HEK293 (cell line): ENCODE measurements at regions of chr9 and their contacts with region 1.

Region 1: DNA sequence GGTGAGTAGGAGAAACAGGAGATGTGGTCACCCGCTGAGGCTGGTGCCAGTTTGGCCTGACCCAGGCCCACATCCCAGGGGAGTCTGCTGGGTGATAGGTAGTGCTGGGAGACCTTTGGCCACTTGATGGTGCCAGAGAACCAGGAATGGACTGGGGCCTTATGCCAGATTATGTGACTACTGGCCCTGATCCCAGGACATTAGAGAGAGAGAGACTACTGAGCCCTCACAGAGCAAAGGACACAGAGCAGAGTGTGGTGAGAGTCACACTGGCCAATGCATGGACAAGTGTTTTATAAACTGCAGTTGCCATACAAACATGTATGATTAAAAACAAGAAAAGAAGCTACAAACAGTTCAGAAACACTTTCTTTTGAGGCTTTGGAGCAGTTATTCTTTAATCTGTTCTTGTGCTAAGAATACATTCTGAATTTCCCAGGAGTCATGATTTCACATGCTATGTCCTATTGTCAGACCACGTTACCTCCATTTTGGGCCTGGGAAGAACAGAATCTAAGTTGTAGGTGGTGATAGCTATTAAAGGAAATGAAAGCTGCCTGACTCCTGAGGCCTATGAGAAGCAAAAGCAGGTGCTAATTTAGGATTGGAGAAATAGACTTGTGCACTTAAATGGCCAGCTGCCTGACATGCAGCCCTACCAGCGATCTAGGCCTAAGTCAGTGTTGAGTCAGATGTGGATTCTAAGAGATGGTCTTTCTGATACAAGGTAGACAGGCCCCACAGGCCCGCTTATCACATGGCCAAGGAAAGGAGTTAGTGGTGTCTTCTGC is 32.6 kb upstream of the TMOD1 start:
- H3K4me3 ChIP-seq: no peak overlapping the region
- H3K27ac ChIP-seq: no peak overlapping the region
- H3K4me1 ChIP-seq: no peaks in the 10 kb centered on the region
- CTCF ChIP-seq: peak; percentile 70

Region 2: GRCh38 chr9:96854073-96854876 is 614.6 kb before region 1 on chr9 and contains the start of gene ZNF782:
- CTCF ChIA-PET with region 1: interaction called, 16 read pairs
- POLR2A ChIA-PET with region 1: no interaction called
- H3K4me3 ChIP-seq: peak within 1 kb of the TSS; percentile 84
- H3K27ac ChIP-seq: peak within 1 kb of the TSS; percentile 53; the same call in 1 of the 2 replicates
- H3K4me1 ChIP-seq: no peaks in the 10 kb centered on the region
- CTCF ChIP-seq: 0 out of 2 replicates have a peak, but pooled peaks have one; percentile 16

Region 3: DNA sequence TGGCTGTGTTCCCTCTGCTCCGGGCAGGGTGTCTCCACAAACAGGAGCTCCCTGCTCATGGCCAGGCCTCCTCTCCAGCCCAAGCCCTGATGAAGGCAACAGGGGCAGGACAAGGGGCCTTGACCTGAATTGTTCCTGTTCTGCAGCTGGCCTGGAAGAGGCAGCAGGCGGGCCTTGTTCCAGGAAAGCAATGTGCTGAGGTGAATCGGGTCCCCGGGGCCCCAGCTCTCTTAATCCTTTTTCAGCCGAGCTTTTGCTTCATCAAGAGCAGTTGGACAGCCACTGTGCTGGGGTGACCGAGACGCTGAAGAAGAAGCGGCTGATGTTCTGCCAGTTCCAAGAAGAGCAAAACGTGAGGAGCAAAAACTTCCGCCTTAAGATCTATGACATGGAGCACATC is 120.0 kb before region 1 on chr9:
- CTCF ChIA-PET with region 1: no interaction called
- POLR2A ChIA-PET with region 1: no interaction called
- H3K4me3 ChIP-seq: no peak overlapping the region
- H3K27ac ChIP-seq: no peak overlapping the region
- H3K4me1 ChIP-seq: no peaks in the 10 kb centered on the region
- CTCF ChIP-seq: no peak

Region 4: DNA sequence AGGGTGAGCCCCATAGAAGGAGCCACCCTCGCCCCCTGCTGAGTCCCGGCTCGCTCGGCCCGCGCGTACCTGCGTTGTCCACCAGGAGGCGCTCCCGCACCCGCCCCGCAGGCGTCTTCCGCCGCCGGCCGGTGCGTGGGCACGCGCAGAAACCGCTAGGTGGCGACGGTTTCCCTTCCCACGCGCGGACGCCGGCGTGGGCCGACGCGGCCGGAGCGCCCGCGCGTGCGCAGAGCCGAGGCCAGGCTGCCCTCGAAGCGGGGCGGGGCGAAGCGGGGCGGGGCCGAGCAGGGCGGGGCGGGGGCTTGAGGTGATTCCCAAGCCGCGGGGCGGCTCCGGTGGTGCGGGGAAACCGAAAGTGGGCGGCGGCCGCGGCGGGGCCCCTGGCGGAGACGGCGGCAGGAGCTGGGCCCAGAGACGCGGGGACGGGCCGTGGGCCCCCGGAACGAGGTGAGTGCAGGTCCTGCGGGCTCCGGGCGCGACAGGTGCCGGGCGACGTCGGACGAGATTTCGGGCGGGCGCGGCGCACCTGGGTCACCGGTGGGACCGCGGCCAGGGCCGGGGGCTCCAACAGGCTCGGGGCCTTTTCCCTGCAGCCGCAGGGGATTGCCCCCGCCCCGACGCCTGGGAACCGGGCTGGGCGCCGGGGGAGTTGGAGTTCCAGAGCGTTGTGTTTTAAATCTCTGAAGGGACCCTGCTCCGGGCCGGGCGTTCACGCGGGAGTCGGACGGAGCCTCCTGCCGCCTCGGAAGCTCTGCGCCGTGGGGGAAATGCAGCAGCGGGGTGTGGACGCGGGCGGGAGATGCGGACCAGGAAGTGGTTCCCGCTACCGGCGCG is 56.8 kb before region 1 on chr9 and contains the start of gene TDRD7:
- CTCF ChIA-PET with region 1: interaction called, 12 read pairs
- POLR2A ChIA-PET with region 1: no interaction called
- H3K4me3 ChIP-seq: peak within 1 kb of the TSS; percentile 81
- H3K27ac ChIP-seq: peak within 1 kb of the TSS; percentile 53; the same call in 1 of the 2 replicates
- H3K4me1 ChIP-seq: no peaks in the 10 kb centered on the region
- CTCF ChIP-seq: peak; percentile 79

Region 5: DNA sequence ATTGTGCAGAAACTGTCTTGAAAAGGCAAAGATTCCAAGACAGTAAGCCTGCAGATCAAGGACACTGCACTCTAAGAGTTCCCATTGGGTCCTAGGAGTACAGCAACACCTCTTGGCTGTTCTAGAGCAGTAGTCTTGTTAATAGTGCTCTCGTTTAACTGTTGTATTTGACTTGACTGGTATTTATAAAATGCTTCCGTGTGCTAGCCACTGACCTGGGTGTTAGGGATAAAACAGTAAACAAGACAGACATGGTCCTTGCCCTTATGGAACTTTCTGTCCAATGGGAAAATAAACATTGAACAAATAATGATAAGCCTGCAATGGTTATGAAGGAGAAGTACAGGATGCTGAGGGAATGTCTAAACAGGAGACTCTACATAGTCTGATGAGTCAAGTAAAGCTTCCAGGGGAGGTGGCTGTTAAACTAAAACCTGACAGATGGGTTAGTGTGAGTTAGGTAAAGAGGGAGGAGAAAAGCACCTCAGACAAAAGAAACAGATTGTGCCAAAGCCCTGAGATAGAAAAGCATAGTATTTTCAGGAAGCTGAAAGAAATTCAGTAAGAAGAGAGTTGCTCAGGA is 23.6 kb before region 1 on chr9:
- CTCF ChIA-PET with region 1: interaction called, 13 read pairs
- POLR2A ChIA-PET with region 1: no interaction called
- H3K4me3 ChIP-seq: no peak overlapping the region
- H3K27ac ChIP-seq: no peak overlapping the region
- H3K4me1 ChIP-seq: no peaks in the 10 kb centered on the region
- CTCF ChIP-seq: no peak

Region 6: GRCh38 chr9:97487107-97487506 is 18.3 kb after region 1 on chr9:
- CTCF ChIA-PET with region 1: interaction called, 58 read pairs
- POLR2A ChIA-PET with region 1: no interaction called
- H3K4me3 ChIP-seq: no peak overlapping the region
- H3K27ac ChIP-seq: no peak overlapping the region
- H3K4me1 ChIP-seq: no peaks in the 10 kb centered on the region
- CTCF ChIP-seq: no peak

Region 7: GRCh38 chr9:97501177-97501971 is 32.5 kb after region 1 on chr9 and contains the start of gene TMOD1:
- CTCF ChIA-PET with region 1: interaction called, 45 read pairs
- POLR2A ChIA-PET with region 1: no interaction called
- H3K4me3 ChIP-seq: peak within 1 kb of the TSS; percentile 71
- H3K27ac ChIP-seq: peak within 1 kb of the TSS; percentile 63; the same call in 1 of the 2 replicates
- H3K4me1 ChIP-seq: peaks cover 3% of the 10 kb centered on the region; the same call in 1 of the 2 replicates
- CTCF ChIP-seq: 0 out of 2 replicates have a peak, but pooled peaks have one; percentile 21

Region 8: DNA sequence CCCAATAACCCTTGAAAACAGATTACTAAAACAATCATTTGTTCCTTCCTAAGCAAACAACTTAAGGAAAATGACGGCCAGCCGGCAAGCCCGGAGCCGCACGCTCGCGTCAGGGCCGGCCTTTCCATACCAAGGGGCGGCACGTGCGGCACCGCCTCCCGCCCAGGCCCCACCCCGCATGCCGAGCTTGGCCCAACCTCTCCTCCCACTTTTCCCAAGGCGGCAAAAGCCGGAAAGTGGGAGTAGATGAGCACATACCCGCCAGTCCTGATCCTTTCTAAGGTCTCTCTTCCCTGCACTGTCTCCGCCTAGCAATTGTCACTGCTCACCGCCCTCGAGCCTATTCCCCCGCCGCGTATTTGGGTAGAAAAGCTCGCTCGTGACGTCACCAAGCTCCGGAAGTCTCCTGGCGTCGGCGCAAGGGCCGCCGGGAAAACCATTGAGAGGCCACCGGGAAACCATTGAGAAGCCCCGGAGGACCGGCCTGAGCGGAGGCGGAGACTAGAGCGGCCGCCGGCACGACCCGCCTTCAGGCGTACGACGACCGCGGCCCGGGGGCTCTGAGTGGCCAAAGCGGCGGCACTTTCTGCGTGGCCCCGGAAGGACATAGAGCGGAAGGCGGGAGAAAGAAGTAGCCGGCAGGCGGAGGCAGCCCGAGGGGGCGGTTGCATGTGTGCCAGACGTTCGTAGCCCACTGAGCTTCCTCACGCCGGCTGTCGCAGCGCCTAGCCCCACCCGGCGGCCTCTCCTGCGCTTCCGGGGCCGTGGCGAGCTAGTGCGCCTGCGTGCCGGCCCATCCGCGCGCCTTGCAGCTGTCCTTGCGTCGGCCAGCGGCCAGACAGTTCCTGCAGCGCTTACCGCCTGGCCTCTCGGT is 164.4 kb after region 1 on chr9 and contains the starts of genes NCBP1 and TSTD2:
- CTCF ChIA-PET with region 1: interaction called, 12 read pairs
- POLR2A ChIA-PET with region 1: interaction called, 5 read pairs
- H3K4me3 ChIP-seq: peak within 1 kb of the TSS; percentile 97
- H3K27ac ChIP-seq: peak within 1 kb of the TSS; percentile 92
- H3K4me1 ChIP-seq: no peaks in the 10 kb centered on the region; the same call in 1 of the 2 replicates
- CTCF ChIP-seq: no peak; the same call in 1 of the 2 replicates